ENCODE measurements at regions of chr7 and their contacts with region 1.

Region 1: GRCh38 chr7:73828107-73828803 is 2.5 kb upstream of the CLDN4 start:
- DNase-seq: peak; percentile 89
- ATAC-seq: peak; percentile 6
- H3K4me3 ChIP-seq: peak overlapping the region in 1 of 3 experiments; percentile 39; a peak in 1 of 6 replicates
- H3K27ac ChIP-seq: no peak overlapping the region
- H3K4me1 ChIP-seq: peaks cover 61% of the 10 kb centered on the region
- H3K27me3 ChIP-seq: peaks cover 0 to 25% of the 10 kb centered on the region in 2 experiments; a peak in 2 of 5 replicates
- CTCF ChIP-seq: no peak
- EP300 ChIP-seq: no peak
- POLR2A ChIP-seq: no peak
- RAD21 ChIP-seq: no peak

Region 2: GRCh38 chr7:73730485-73730884 is 97.8 kb before region 1 on chr7:
- CTCF ChIA-PET with region 1: no interaction called
- POLR2A ChIA-PET with region 1: no interaction called
- in situ Hi-C with region 1: no loop called
- intact Hi-C with region 1: no loop called
- DNase-seq: no peak
- ATAC-seq: no peak
- H3K4me3 ChIP-seq: no peak overlapping the region
- H3K27ac ChIP-seq: no peak overlapping the region
- H3K4me1 ChIP-seq: peaks cover 24% of the 10 kb centered on the region
- H3K27me3 ChIP-seq: no peaks in the 10 kb centered on the region; a peak in 1 of 5 replicates
- CTCF ChIP-seq: no peak
- EP300 ChIP-seq: no peak
- POLR2A ChIP-seq: no peak
- RAD21 ChIP-seq: no peak

Region 3: DNA sequence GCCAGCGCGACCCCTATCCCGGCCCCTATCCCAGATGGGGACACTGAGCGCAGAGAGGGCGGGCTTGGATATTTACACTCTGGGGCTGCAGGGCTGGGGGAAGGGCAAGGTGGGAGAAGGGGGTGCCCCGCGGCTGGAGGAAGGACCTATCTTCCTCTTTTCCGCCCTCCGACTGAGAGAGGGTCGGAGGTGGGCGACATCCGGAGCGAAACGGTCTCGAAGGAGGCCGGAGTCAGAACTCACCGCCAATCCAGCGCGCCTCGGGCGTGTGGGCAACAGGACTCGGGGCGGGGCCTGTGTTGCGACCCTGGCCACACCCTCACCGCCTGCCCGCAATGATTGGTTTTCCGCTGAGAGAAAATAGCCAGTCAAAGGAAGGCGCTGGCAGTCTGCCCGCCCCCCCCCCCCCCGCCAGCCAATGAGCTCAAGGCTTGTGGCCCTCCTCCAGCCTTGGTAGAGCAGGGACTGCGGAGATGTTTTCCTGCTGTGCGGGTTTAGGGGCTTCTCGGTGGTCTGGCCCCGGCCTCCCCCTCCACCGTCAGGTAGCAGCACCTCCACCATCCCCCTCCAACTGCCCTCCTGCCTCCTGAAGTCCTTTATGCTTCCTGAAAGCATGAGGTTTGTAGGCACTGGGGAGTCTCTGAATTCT is 14.1 kb after region 1 on chr7 and contains the start of gene METTL27:
- CTCF ChIA-PET with region 1: no interaction called
- POLR2A ChIA-PET with region 1: interaction called, 55 read pairs
- in situ Hi-C with region 1: no loop called
- intact Hi-C with region 1: no loop called
- DNase-seq: peak; percentile 86
- ATAC-seq: peak; percentile 94
- H3K4me3 ChIP-seq: peak within 1 kb of the TSS; percentile 75 to 83 (median 77)
- H3K27ac ChIP-seq: peak within 1 kb of the TSS; percentile 25
- H3K4me1 ChIP-seq: peaks cover 48% of the 10 kb centered on the region
- H3K27me3 ChIP-seq: peaks cover 0 to 3% of the 10 kb centered on the region in 2 experiments; a peak in 1 of 5 replicates
- CTCF ChIP-seq: no peak
- EP300 ChIP-seq: no peak
- POLR2A ChIP-seq: peak; percentile 53 to 88; a peak in 3 of 4 replicates
- RAD21 ChIP-seq: no peak
- total RNA-seq, gene METTL27: 1.2 and 2.0 TPM in 2 replicates

Region 4: GRCh38 chr7:73851410-73852234 is 23.4 kb after region 1 on chr7:
- CTCF ChIA-PET with region 1: no interaction called
- POLR2A ChIA-PET with region 1: interaction called, 6 read pairs
- in situ Hi-C with region 1: no loop called
- intact Hi-C with region 1: loop called (anchors 2 kb)
- DNase-seq: peak; percentile 52
- ATAC-seq: no peak
- H3K4me3 ChIP-seq: no peak overlapping the region
- H3K27ac ChIP-seq: no peak overlapping the region
- H3K4me1 ChIP-seq: peaks cover 6% of the 10 kb centered on the region
- H3K27me3 ChIP-seq: peaks cover 0 to 14% of the 10 kb centered on the region in 2 experiments; a peak in 1 of 5 replicates
- CTCF ChIP-seq: no peak
- EP300 ChIP-seq: no peak
- POLR2A ChIP-seq: no peak
- RAD21 ChIP-seq: no peak

Region 5: GRCh38 chr7:74164985-74165456 is 336.8 kb after region 1 on chr7:
- CTCF ChIA-PET with region 1: no interaction called
- POLR2A ChIA-PET with region 1: no interaction called
- in situ Hi-C with region 1: no loop called
- intact Hi-C with region 1: no loop called
- DNase-seq: no peak
- ATAC-seq: no peak; the same call in 1 of the 3 replicates
- H3K4me3 ChIP-seq: no peak overlapping the region
- H3K27ac ChIP-seq: no peak overlapping the region
- H3K4me1 ChIP-seq: peaks cover 19% of the 10 kb centered on the region
- H3K27me3 ChIP-seq: no peaks in the 10 kb centered on the region
- CTCF ChIP-seq: peak; percentile 52
- EP300 ChIP-seq: no peak
- POLR2A ChIP-seq: no peak
- RAD21 ChIP-seq: no peak

Region 6: DNA sequence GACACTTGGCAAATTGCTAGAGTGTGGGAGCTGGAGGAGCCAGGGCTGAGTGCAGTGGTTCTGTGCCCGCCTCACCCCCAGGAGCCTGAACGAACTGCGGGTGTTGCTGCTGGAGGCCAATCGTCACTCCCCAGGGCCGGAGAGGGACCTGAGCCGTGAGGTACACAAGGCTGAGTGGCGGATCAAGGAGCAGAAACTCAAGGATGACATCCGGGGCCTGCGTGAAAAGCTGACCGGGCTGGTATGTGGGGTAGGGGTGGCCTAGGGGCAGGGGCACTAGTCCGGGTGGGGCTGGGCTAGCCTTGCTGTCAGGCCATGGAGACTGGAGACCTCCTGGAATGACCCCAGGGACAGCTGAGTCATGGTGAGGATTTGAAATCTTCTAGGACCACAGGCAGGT is 568.7 kb after region 1 on chr7:
- CTCF ChIA-PET with region 1: no interaction called
- POLR2A ChIA-PET with region 1: no interaction called
- in situ Hi-C with region 1: no loop called
- intact Hi-C with region 1: no loop called
- DNase-seq: no peak
- ATAC-seq: no peak
- H3K4me3 ChIP-seq: no peak overlapping the region
- H3K27ac ChIP-seq: no peak overlapping the region
- H3K4me1 ChIP-seq: no peaks in the 10 kb centered on the region
- H3K27me3 ChIP-seq: no peaks in the 10 kb centered on the region
- CTCF ChIP-seq: no peak
- EP300 ChIP-seq: no peak
- POLR2A ChIP-seq: no peak
- RAD21 ChIP-seq: no peak